ENCODE measurements at regions of chr2 and their contacts with region 1.

Region 1: GRCh38 chr2:197310271-197310985 is at the start of gene ANKRD44:
- DNase-seq: peak; percentile 96
- H3K4me3 Mint-ChIP-seq: peak within 1 kb of the TSS; percentile 91
- H3K27ac Mint-ChIP-seq: peak within 1 kb of the TSS; percentile 95
- H3K4me1 Mint-ChIP-seq: peaks cover 56% of the 10 kb centered on the region
- H3K27me3 Mint-ChIP-seq: no peaks in the 10 kb centered on the region
- total RNA-seq, gene ANKRD44: 130 and 147 TPM in 2 replicates

Region 2: GRCh38 chr2:196926562-196927375 is 383.7 kb before region 1 on chr2 and contains the start of gene PGAP1:
- intact Hi-C with region 1: loop called (anchors 5 kb)
- DNase-seq: peak; percentile 97
- H3K4me3 Mint-ChIP-seq: peak within 1 kb of the TSS; percentile 100
- H3K27ac Mint-ChIP-seq: peak within 1 kb of the TSS; percentile 100
- H3K4me1 Mint-ChIP-seq: peaks cover 46% of the 10 kb centered on the region
- H3K27me3 Mint-ChIP-seq: no peaks in the 10 kb centered on the region
- total RNA-seq, gene PGAP1: 22.6 and 27.1 TPM in 2 replicates

Region 3: GRCh38 chr2:197198890-197199289 is 111.5 kb before region 1 on chr2:
- intact Hi-C with region 1: loop called (anchors 1 kb)
- DNase-seq: peak; percentile 97
- H3K4me3 Mint-ChIP-seq: peak overlapping the region; percentile 84
- H3K27ac Mint-ChIP-seq: peak overlapping the region; percentile 99
- H3K4me1 Mint-ChIP-seq: peaks cover 65% of the 10 kb centered on the region
- H3K27me3 Mint-ChIP-seq: no peaks in the 10 kb centered on the region

Region 4: GRCh38 chr2:197255543-197255942 is 54.9 kb before region 1 on chr2:
- intact Hi-C with region 1: loop called (anchors 1 kb)
- DNase-seq: peak; percentile 94
- H3K4me3 Mint-ChIP-seq: peak overlapping the region; percentile 81
- H3K27ac Mint-ChIP-seq: peak overlapping the region; percentile 96
- H3K4me1 Mint-ChIP-seq: peaks cover 60% of the 10 kb centered on the region
- H3K27me3 Mint-ChIP-seq: no peaks in the 10 kb centered on the region

Region 5: DNA sequence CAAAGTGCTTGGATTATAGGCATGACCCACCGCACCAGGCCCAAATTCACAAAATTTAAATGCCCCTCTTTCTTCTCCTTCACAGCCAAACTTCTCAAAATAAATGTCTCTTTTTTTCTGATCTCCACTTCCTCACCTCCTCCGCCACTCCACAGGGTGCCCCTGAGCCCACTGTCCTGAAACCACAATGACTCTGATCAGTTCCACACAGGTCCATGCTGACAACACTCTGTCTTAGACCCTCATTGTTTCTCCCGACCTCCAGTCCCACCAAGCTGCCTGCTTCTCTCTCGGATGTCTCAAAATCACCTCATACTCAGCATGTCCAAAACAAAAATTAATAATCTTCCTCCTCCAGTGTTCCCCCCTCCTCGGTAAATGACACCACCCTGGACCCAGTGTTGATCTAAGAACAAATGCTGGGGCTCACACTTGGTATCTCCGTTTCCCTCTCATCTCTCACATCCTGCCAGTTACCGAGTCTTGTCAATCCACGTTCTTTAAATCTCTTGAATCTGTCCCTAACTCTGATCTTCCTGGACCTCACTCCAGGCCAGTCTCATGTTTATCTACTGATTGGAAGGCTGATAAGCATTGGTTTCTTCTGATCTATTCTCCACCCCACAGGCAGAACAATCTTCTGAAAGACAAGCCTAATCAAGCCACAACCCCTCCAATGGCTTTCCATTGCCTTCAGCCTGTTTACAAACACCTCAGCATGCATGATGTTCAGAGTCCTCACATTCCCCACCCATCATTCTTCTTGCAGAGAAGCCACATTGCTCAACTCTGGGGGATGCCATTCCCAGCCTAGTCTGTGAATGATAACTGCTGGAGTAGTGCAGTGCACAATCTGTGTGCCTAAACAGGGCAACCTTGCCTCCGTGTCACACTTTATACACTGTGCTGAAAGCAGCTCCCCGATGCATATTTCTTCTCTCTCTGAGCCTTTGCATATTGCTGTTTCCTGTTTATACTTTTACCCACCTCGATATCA is 12.6 kb after region 1 on chr2:
- intact Hi-C with region 1: loop called (anchors 1 kb)
- DNase-seq: peak; percentile 77
- H3K4me3 Mint-ChIP-seq: peak overlapping the region; percentile 82
- H3K27ac Mint-ChIP-seq: peak overlapping the region; percentile 96
- H3K4me1 Mint-ChIP-seq: peaks cover 53% of the 10 kb centered on the region
- H3K27me3 Mint-ChIP-seq: no peaks in the 10 kb centered on the region

Region 6: GRCh38 chr2:197434541-197435513 is 124.4 kb after region 1 on chr2 and contains the start of gene SF3B1:
- intact Hi-C with region 1: loop called (anchors 5 kb)
- DNase-seq: peak; percentile 100
- H3K4me3 Mint-ChIP-seq: peak within 1 kb of the TSS; percentile 84
- H3K27ac Mint-ChIP-seq: peak within 1 kb of the TSS; percentile 100
- H3K4me1 Mint-ChIP-seq: peaks cover 45% of the 10 kb centered on the region
- H3K27me3 Mint-ChIP-seq: peaks cover 2% of the 10 kb centered on the region
- total RNA-seq, gene SF3B1: 259 and 278 TPM in 2 replicates

Region 7: GRCh38 chr2:197461057-197461456 is 150.6 kb after region 1 on chr2:
- intact Hi-C with region 1: no loop called
- DNase-seq: no peak
- H3K4me3 Mint-ChIP-seq: no peak overlapping the region
- H3K27ac Mint-ChIP-seq: no peak overlapping the region
- H3K4me1 Mint-ChIP-seq: peaks cover 12% of the 10 kb centered on the region
- H3K27me3 Mint-ChIP-seq: no peaks in the 10 kb centered on the region

Measured in activated CD4-positive, alpha-beta T cell treated with anti-CD3 and anti-CD28 coated beads, Interleukin-2, amount 10 ng/mL, durations not matched to agents 24 days and 14 days (primary cell).